SK-N-SH (cell line): ENCODE measurements at regions of chr11 and their contacts with region 1.

Region 1: GRCh38 chr11:72831513-72832300 is 17.5 kb downstream of the ATG16L2 start:
- DNase-seq: peak; percentile 88
- H3K4me3 ChIP-seq: no peak overlapping the region; a peak in 1 of 4 replicates
- H3K27ac ChIP-seq: no peak overlapping the region; a peak in 1 of 4 replicates
- H3K4me1 ChIP-seq: peaks cover 5 to 10% of the 10 kb centered on the region in 2 experiments; a peak in 2 of 4 replicates
- H3K27me3 ChIP-seq: no peaks in the 10 kb centered on the region
- CTCF ChIP-seq: peak; percentile 97
- EP300 ChIP-seq: no peak
- RAD21 ChIP-seq: peak; percentile 98

Region 2: DNA sequence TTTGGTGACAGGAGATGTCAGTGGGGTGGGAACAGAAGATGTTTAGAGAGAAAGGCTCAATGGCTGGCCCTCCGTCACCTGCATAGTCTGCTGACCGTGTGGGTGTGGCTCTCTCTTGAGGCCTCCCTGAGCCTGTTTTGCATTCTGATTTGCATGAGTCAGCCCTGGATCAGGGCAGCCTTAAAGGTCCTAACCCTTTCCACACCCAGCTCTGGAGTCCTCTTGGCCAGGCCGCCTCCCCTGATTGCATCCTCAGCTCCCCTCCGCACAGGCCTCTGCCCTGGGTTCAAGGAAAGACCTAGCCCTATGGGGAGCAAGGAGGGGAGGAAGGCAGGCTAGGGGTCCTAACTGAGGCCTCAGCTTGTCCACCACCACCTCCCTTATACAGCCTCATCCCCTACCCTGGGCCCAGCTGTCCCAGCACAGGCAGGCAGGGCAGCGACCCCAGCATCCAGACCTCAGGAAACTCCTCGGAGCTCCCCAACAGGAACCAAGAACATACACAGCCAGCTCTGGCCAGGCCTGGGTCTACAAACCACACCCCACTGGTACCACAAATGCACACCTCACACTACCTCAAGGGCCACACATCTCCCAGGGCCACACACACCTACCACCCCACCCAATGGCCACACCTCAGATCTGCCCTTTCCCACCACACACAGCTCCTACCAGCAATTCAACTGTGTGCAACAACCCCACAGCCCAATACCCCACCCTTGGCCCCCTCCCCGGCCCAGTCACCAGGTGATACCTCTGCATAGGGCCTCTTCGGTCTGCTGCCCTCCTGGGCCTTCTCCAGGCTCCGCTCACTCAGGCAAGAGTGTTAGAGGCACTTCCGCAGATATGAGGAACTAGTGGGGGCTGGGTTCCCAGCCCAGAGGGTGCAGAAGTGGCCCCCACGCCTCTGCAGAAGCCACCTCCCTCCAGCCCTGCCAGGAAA is 93.2 kb before region 1 on chr11:
- CTCF ChIA-PET with region 1: no interaction called
- POLR2A ChIA-PET with region 1: no interaction called
- DNase-seq: no peak
- H3K4me3 ChIP-seq: no peak overlapping the region
- H3K27ac ChIP-seq: no peak overlapping the region
- H3K4me1 ChIP-seq: peaks cover 21 to 53% of the 10 kb centered on the region in 2 experiments; a peak in 3 of 4 replicates
- H3K27me3 ChIP-seq: no peaks in the 10 kb centered on the region
- CTCF ChIP-seq: no peak
- EP300 ChIP-seq: no peak
- RAD21 ChIP-seq: no peak

Region 3: GRCh38 chr11:72814286-72815109 is 17.2 kb before region 1 on chr11 and contains the start of gene ATG16L2:
- CTCF ChIA-PET with region 1: interaction called, 17 read pairs
- POLR2A ChIA-PET with region 1: no interaction called
- DNase-seq: peak; percentile 98
- H3K4me3 ChIP-seq: peak within 1 kb of the TSS; percentile 83 to 92
- H3K27ac ChIP-seq: peak within 1 kb of the TSS; percentile 91 to 96
- H3K4me1 ChIP-seq: peaks cover 8 to 33% of the 10 kb centered on the region in 2 experiments; a peak in 2 of 4 replicates
- H3K27me3 ChIP-seq: no peaks in the 10 kb centered on the region
- CTCF ChIP-seq: peak; percentile 18
- EP300 ChIP-seq: no peak; a peak in 1 of 4 replicates
- RAD21 ChIP-seq: no peak
- polyA plus RNA-seq, gene ATG16L2: 26.9 and 29.4 TPM in 2 replicates

Region 4: GRCh38 chr11:72939031-72939430 is 107.3 kb after region 1 on chr11:
- CTCF ChIA-PET with region 1: interaction called, 13 read pairs
- POLR2A ChIA-PET with region 1: no interaction called
- DNase-seq: no peak
- H3K4me3 ChIP-seq: no peak overlapping the region
- H3K27ac ChIP-seq: no peak overlapping the region
- H3K4me1 ChIP-seq: no peaks in the 10 kb centered on the region; a peak in 1 of 4 replicates
- H3K27me3 ChIP-seq: no peaks in the 10 kb centered on the region
- CTCF ChIP-seq: no peak
- EP300 ChIP-seq: no peak
- RAD21 ChIP-seq: no peak

Region 5: GRCh38 chr11:73141848-73142286 is 310.2 kb after region 1 on chr11:
- CTCF ChIA-PET with region 1: interaction called, 50 read pairs
- POLR2A ChIA-PET with region 1: no interaction called
- DNase-seq: no peak
- H3K4me3 ChIP-seq: peak overlapping the region; percentile 90 to 97
- H3K27ac ChIP-seq: peak overlapping the region; percentile 79 to 95
- H3K4me1 ChIP-seq: peaks cover 0 to 20% of the 10 kb centered on the region in 2 experiments; a peak in 2 of 4 replicates
- H3K27me3 ChIP-seq: no peaks in the 10 kb centered on the region
- CTCF ChIP-seq: no peak
- EP300 ChIP-seq: no peak
- RAD21 ChIP-seq: no peak

Region 6: GRCh38 chr11:73147771-73148681 is 316.3 kb after region 1 on chr11:
- CTCF ChIA-PET with region 1: interaction called, 50 read pairs
- POLR2A ChIA-PET with region 1: no interaction called
- DNase-seq: peak; percentile 28
- H3K4me3 ChIP-seq: no peak overlapping the region
- H3K27ac ChIP-seq: peak overlapping the region in 1 of 2 experiments; percentile 43; a peak in 1 of 4 replicates
- H3K4me1 ChIP-seq: peaks cover 0 to 26% of the 10 kb centered on the region in 2 experiments; a peak in 2 of 4 replicates
- H3K27me3 ChIP-seq: no peaks in the 10 kb centered on the region
- CTCF ChIP-seq: no peak
- EP300 ChIP-seq: no peak
- RAD21 ChIP-seq: no peak

Region 7: GRCh38 chr11:73184953-73185671 is 353.4 kb after region 1 on chr11:
- CTCF ChIA-PET with region 1: interaction called, 271 read pairs
- POLR2A ChIA-PET with region 1: no interaction called
- DNase-seq: peak; percentile 77
- H3K4me3 ChIP-seq: no peak overlapping the region; a peak in 1 of 4 replicates
- H3K27ac ChIP-seq: no peak overlapping the region
- H3K4me1 ChIP-seq: peaks cover 0 to 12% of the 10 kb centered on the region in 2 experiments; a peak in 3 of 4 replicates
- H3K27me3 ChIP-seq: no peaks in the 10 kb centered on the region
- CTCF ChIP-seq: peak; percentile 71
- EP300 ChIP-seq: no peak
- RAD21 ChIP-seq: peak; percentile 74

Region 8: GRCh38 chr11:73236854-73237253 is 405.1 kb after region 1 on chr11:
- CTCF ChIA-PET with region 1: interaction called, 22 read pairs
- POLR2A ChIA-PET with region 1: no interaction called
- DNase-seq: peak; percentile 63
- H3K4me3 ChIP-seq: no peak overlapping the region; a peak in 1 of 4 replicates
- H3K27ac ChIP-seq: no peak overlapping the region
- H3K4me1 ChIP-seq: peaks cover 0 to 7% of the 10 kb centered on the region in 2 experiments; a peak in 1 of 4 replicates
- H3K27me3 ChIP-seq: no peaks in the 10 kb centered on the region
- CTCF ChIP-seq: peak; percentile 62
- EP300 ChIP-seq: no peak
- RAD21 ChIP-seq: peak; percentile 53